ENCODE measurements at regions of chr3 and their contacts with region 1.

Region 1: GRCh38 chr3:50550079-50550741 is 17.3 kb downstream of the C3orf18 start:
- DNase-seq: no peak
- H3K4me3 ChIP-seq: no peak overlapping the region
- H3K27me3 ChIP-seq: peaks cover 3% of the 10 kb centered on the region
- CTCF ChIP-seq: peak; percentile 88

Region 2: DNA sequence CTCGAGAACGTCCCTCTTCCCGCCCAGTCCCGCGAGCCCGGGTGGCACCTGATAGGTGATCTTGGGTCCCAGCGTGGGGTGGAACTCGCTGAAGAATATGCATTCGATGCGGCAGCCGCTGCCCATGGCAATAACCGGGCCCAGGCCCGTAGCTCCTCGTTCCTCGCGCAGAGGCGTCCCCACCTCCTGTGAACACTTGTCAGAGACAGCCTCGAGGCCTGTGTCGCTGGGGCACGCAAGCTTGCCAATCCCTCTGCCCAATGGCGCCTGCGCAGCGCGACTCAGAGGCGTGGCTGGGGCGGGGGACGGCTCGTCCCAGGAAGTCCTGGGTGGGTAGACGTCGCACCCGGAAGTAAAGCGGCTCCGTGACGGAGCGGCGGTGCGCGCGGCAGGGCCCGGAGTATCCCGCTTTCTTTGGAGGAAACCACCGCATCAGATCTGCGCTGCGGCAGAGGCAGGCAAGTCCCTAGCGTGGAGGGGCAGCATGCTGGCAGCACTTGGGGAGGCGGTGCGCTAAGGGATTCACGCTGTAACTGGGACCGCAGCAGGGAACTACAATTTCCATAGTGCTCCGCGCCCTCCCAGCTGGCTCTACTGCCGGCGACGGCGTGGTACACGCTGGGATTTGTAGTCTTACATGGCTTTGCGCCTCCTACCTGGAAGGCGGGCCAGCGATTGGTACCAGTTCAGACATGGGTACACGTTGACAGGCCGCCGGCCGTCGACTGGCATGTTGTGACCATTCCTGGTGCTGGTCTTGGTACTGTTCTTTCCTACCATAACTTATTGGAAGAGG is 199.5 kb before region 1 on chr3 and contains the starts of genes CYB561D2 and NPRL2:
- CTCF ChIA-PET with region 1: interaction called, 98 read pairs
- POLR2A ChIA-PET with region 1: no interaction called
- DNase-seq: peak; percentile 68
- H3K4me3 ChIP-seq: peak within 1 kb of the TSS; percentile 85
- H3K27me3 ChIP-seq: no peaks in the 10 kb centered on the region
- CTCF ChIP-seq: no peak
- polyA plus RNA-seq, gene CYB561D2: 22.3 and 39.3 TPM in 2 replicates
- polyA plus RNA-seq, gene NPRL2: 31.4 and 45.0 TPM in 2 replicates

Region 3: DNA sequence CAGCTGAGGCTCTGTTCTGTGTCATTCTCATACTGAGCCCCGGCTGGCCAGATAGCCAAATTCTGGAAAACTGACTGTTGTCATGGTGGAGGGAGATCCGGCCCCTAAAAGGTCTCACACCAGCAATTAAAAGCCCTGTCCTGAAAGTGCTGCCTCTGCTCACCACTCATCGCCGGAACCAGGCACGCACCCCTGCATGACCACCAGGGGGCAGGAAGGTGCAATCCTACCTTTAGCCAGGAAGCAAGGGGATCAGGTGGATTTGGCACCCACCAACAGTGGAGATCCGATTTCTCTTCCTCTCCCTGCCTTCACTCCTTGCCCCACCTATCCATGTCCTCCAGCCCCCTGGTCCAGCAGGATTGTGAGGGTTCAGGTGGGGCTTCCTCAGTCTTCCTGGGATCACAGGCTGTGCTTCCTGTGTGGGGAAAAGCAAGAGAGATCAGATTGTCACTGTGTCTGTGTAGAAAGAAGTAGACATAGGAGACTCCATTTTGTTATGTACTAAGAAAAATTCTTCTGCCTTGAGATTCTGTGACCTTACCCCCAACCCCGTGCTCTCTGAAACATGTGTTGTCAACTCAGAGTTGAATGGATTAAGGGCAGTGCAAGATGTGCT is 30.6 kb before region 1 on chr3:
- CTCF ChIA-PET with region 1: interaction called, 10 read pairs
- POLR2A ChIA-PET with region 1: no interaction called
- DNase-seq: no peak
- H3K4me3 ChIP-seq: no peak overlapping the region
- H3K27me3 ChIP-seq: peaks cover 16% of the 10 kb centered on the region
- CTCF ChIP-seq: peak; percentile 94

Region 4: GRCh38 chr3:50536471-50537180 is 13.6 kb before region 1 on chr3:
- CTCF ChIA-PET with region 1: interaction called, 22 read pairs
- POLR2A ChIA-PET with region 1: no interaction called
- DNase-seq: no peak
- H3K4me3 ChIP-seq: no peak overlapping the region
- H3K27me3 ChIP-seq: peaks cover 14% of the 10 kb centered on the region
- CTCF ChIP-seq: no peak

Region 5: DNA sequence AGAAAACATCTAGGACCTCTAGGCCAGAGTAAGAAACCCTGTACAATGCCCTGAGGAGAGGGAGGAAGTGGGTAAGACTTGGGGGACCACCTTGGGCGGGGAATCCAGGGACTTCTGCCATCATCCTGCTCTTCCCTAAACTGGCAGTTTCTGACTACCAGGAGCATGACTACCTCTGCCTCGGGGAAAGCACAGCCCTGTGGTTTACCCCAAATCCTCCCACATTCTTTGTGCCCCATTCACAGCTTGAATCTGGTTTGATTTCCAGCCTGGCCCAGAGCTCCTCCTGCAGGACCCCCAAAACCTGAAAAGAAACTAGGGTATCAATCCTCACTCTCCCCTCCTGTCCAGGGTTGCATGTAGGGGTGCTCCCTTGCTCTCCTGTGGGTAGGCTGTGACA is 12.7 kb after region 1 on chr3:
- CTCF ChIA-PET with region 1: interaction called, 11 read pairs
- POLR2A ChIA-PET with region 1: no interaction called
- DNase-seq: peak; percentile 58
- H3K4me3 ChIP-seq: no peak overlapping the region
- H3K27me3 ChIP-seq: no peaks in the 10 kb centered on the region
- CTCF ChIP-seq: peak; percentile 28; the same call in 1 of the 2 replicates